GM12878 (cell line): ENCODE measurements at regions of chr1 and their contacts with region 1.

Region 1: GRCh38 chr1:204516180-204516879 is at the start of gene MDM4:
- DNase-seq: peak; percentile 90
- ATAC-seq: peak; percentile 86
- H3K4me3 ChIP-seq: peak within 1 kb of the TSS; percentile 90
- H3K27ac ChIP-seq: peak within 1 kb of the TSS; percentile 81
- H3K4me1 ChIP-seq: peaks cover 44% of the 10 kb centered on the region
- H3K27me3 ChIP-seq: no peaks in the 10 kb centered on the region
- CTCF ChIP-seq: no peak
- EP300 ChIP-seq: peak in 1 of 2 experiments; percentile 70; a peak in 1 of 4 replicates
- POLR2A ChIP-seq: peak; percentile 94
- RAD21 ChIP-seq: no peak
- polyA plus RNA-seq, gene MDM4: 2.5 to 11.5 TPM

Region 2: DNA sequence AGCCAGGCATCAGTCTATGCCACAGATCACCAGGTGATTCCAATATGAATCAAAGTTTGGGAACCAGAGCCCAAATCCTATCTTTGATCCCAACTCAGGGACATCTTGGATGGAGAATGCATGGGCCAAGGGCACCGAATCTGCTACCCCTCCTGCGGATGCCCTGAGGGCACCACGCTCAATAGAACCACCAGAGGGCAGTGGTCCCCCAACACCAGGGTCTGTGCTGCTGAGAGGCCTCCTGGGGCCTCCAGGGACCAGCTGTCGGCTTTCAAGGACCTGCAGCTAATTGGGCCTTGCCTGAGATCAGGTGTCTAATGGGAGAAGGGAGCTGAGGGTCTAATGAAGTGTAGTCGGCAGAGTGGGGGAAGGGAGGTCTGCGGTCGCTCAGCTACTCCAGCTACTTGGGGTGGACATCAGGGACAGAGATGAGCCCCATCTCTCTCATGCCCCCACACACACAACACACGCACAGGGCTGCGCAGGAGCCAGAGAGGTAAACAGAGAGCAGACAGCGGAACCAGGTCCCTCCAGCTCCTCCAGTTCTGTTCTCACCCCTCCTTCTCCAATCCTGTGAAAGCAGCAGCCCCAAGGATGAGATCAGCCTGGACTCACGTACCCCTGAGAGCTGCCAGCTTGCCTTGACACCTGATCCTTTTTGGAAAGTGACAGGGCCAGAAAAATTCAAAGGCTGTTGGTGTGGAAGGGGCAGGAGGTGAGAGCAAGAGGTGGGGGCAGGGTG is 69.8 kb before region 1 on chr1:
- CTCF ChIA-PET with region 1: interaction called, 8 read pairs
- POLR2A ChIA-PET with region 1: no interaction called
- RAD21 ChIA-PET with region 1: interaction called, 12 read pairs
- SMC1A ChIA-PET with region 1: interaction called, 4 read pairs
- in situ Hi-C with region 1: no loop called
- intact Hi-C with region 1: no loop called
- DNase-seq: no peak
- ATAC-seq: peak; percentile 98
- H3K4me3 ChIP-seq: no peak overlapping the region
- H3K27ac ChIP-seq: no peak overlapping the region
- H3K4me1 ChIP-seq: peaks cover 5% of the 10 kb centered on the region
- H3K27me3 ChIP-seq: no peaks in the 10 kb centered on the region
- CTCF ChIP-seq: peak; percentile 80 to 92 (median 89); a peak in 5 of 6 replicates
- EP300 ChIP-seq: no peak
- POLR2A ChIP-seq: no peak
- RAD21 ChIP-seq: peak; percentile 99

Region 3: GRCh38 chr1:204494281-204495077 is 21.9 kb before region 1 on chr1 and contains the start of gene PIK3C2B:
- CTCF ChIA-PET with region 1: interaction called, 4 read pairs
- POLR2A ChIA-PET with region 1: interaction called, 31 read pairs
- RAD21 ChIA-PET with region 1: interaction called, 8 read pairs
- SMC1A ChIA-PET with region 1: interaction called, 7 read pairs
- in situ Hi-C with region 1: no loop called
- intact Hi-C with region 1: no loop called
- DNase-seq: peak; percentile 55
- ATAC-seq: peak; percentile 92
- H3K4me3 ChIP-seq: peak within 1 kb of the TSS; percentile 92
- H3K27ac ChIP-seq: peak within 1 kb of the TSS; percentile 86
- H3K4me1 ChIP-seq: peaks cover 22% of the 10 kb centered on the region
- H3K27me3 ChIP-seq: no peaks in the 10 kb centered on the region
- CTCF ChIP-seq: peak; percentile 37 to 59 (median 43)
- EP300 ChIP-seq: no peak
- POLR2A ChIP-seq: peak; percentile 86
- RAD21 ChIP-seq: peak; percentile 47
- polyA plus RNA-seq, gene PIK3C2B: 2.2 to 5.0 TPM

Region 4: DNA sequence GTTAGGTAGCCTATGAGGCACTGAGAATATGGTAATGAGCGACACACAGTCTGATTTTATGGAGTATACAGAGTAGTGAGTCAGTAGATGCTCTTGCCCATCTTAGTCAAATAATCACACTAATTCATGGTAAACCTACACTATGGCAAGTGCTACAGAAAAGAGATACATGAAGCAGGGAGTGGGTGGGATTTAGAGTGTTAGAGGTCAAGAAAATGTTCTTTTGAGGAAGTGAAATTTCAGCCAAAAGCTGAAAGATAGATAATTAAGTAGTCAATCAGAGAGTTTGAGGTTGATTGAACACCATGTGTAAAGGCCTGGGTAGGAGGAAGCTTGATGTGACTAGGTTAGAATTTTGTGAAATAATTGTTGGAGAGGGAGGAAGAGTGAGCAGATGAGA is 14.6 kb after region 1 on chr1:
- CTCF ChIA-PET with region 1: interaction called, 13 read pairs
- POLR2A ChIA-PET with region 1: interaction called, 20 read pairs
- RAD21 ChIA-PET with region 1: interaction called, 20 read pairs
- SMC1A ChIA-PET with region 1: interaction called, 42 read pairs
- in situ Hi-C with region 1: no loop called
- intact Hi-C with region 1: loop called (anchors 2 kb)
- DNase-seq: peak; percentile 87
- ATAC-seq: peak; percentile 96
- H3K4me3 ChIP-seq: no peak overlapping the region
- H3K27ac ChIP-seq: peak overlapping the region; percentile 59
- H3K4me1 ChIP-seq: peaks cover 23% of the 10 kb centered on the region
- H3K27me3 ChIP-seq: no peaks in the 10 kb centered on the region
- CTCF ChIP-seq: no peak
- EP300 ChIP-seq: peak in 1 of 2 experiments; percentile 94; a peak in 2 of 4 replicates
- POLR2A ChIP-seq: no peak
- RAD21 ChIP-seq: no peak

Region 5: GRCh38 chr1:204685236-204686006 is 169.1 kb after region 1 on chr1 and contains the start of gene LRRN2:
- CTCF ChIA-PET with region 1: no interaction called
- POLR2A ChIA-PET with region 1: no interaction called
- RAD21 ChIA-PET with region 1: no interaction called
- SMC1A ChIA-PET with region 1: no interaction called
- in situ Hi-C with region 1: no loop called
- intact Hi-C with region 1: no loop called
- DNase-seq: no peak
- ATAC-seq: no peak
- H3K4me3 ChIP-seq: no peak within 1 kb of the TSS
- H3K27ac ChIP-seq: no peak within 1 kb of the TSS
- H3K4me1 ChIP-seq: no peaks in the 10 kb centered on the region
- H3K27me3 ChIP-seq: peaks cover 14 to 17% of the 10 kb centered on the region in 2 experiments
- CTCF ChIP-seq: no peak
- EP300 ChIP-seq: no peak
- POLR2A ChIP-seq: no peak
- RAD21 ChIP-seq: no peak
- polyA plus RNA-seq, gene LRRN2: not detected